Natural killer cell (primary cell): ENCODE measurements at regions of chr3 and their contacts with region 1.

Region 1: GRCh38 chr3:67654099-67654843 is at the start of gene SUCLG2:
- DNase-seq: peak; percentile 71 to 86
- ATAC-seq: peak; percentile 71 to 82 (median 75)
- H3K4me3 ChIP-seq: peak within 1 kb of the TSS; percentile 88
- H3K4me3 Mint-ChIP-seq: peak within 1 kb of the TSS; percentile 82
- H3K27ac ChIP-seq: peak within 1 kb of the TSS; percentile 84
- H3K27ac Mint-ChIP-seq: peak within 1 kb of the TSS; percentile 86 to 89
- H3K4me1 ChIP-seq: peaks cover 30% of the 10 kb centered on the region
- H3K4me1 Mint-ChIP-seq: peaks cover 52 to 59% of the 10 kb centered on the region in 2 donors
- H3K27me3 ChIP-seq: no peaks in the 10 kb centered on the region
- H3K27me3 Mint-ChIP-seq: no peaks in the 10 kb centered on the region
- CTCF ChIP-seq: no peak
- total RNA-seq, gene SUCLG2: 43.6 to 55.8 (median 49.9) TPM

Region 2: GRCh38 chr3:66302288-66302687 is 1352.0 kb before region 1 on chr3:
- intact Hi-C with region 1: loop called (anchors 5 kb)
- DNase-seq: peak in 1 of 2 donors; percentile 84
- ATAC-seq: peak; percentile 61 to 79 (median 70)
- H3K4me3 ChIP-seq: no peak overlapping the region
- H3K4me3 Mint-ChIP-seq: peak overlapping the region; percentile 55
- H3K27ac ChIP-seq: peak overlapping the region; percentile 100
- H3K27ac Mint-ChIP-seq: no peak overlapping the region
- H3K4me1 ChIP-seq: peaks cover 51% of the 10 kb centered on the region
- H3K4me1 Mint-ChIP-seq: peaks cover 17 to 22% of the 10 kb centered on the region in 2 donors
- H3K27me3 ChIP-seq: no peaks in the 10 kb centered on the region
- H3K27me3 Mint-ChIP-seq: no peaks in the 10 kb centered on the region
- CTCF ChIP-seq: no peak

Region 3: GRCh38 chr3:67437086-67437485 is 217.2 kb before region 1 on chr3:
- intact Hi-C with region 1: no loop called
- DNase-seq: no peak
- ATAC-seq: no peak
- H3K4me3 ChIP-seq: no peak overlapping the region
- H3K4me3 Mint-ChIP-seq: no peak overlapping the region
- H3K27ac ChIP-seq: no peak overlapping the region
- H3K27ac Mint-ChIP-seq: no peak overlapping the region
- H3K4me1 ChIP-seq: no peaks in the 10 kb centered on the region
- H3K4me1 Mint-ChIP-seq: peaks cover 14 to 21% of the 10 kb centered on the region in 2 donors
- H3K27me3 ChIP-seq: no peaks in the 10 kb centered on the region
- H3K27me3 Mint-ChIP-seq: no peaks in the 10 kb centered on the region
- CTCF ChIP-seq: no peak

Region 4: DNA sequence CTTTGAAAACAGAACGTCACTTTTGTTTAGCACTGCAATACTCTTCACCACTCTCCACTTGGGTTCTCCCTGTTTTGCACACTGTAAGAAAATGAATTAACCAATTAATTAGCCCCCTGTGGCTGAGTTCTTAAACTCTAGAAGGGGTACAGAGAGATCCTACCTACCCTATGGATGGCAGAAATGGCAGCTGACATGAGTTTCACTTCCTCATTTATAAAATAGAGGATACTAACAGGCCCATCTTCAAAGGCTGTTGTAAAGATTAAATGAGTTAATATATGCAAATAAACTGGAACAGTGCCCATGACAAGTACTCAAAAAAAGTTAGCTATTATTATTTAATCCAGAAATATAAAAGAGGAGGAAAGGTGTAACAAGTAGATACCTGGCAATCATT is 36.8 kb before region 1 on chr3:
- intact Hi-C with region 1: no loop called
- DNase-seq: no peak
- ATAC-seq: no peak
- H3K4me3 ChIP-seq: no peak overlapping the region
- H3K4me3 Mint-ChIP-seq: no peak overlapping the region
- H3K27ac ChIP-seq: no peak overlapping the region
- H3K27ac Mint-ChIP-seq: no peak overlapping the region
- H3K4me1 ChIP-seq: no peaks in the 10 kb centered on the region
- H3K4me1 Mint-ChIP-seq: peaks cover 63 to 65% of the 10 kb centered on the region in 2 donors
- H3K27me3 ChIP-seq: no peaks in the 10 kb centered on the region
- H3K27me3 Mint-ChIP-seq: no peaks in the 10 kb centered on the region
- CTCF ChIP-seq: no peak

Region 5: GRCh38 chr3:67674055-67674454 is 19.8 kb after region 1 on chr3:
- intact Hi-C with region 1: loop called (anchors 1 kb)
- DNase-seq: peak; percentile 26 to 47
- ATAC-seq: peak; percentile 81 to 92 (median 91)
- H3K4me3 ChIP-seq: no peak overlapping the region
- H3K4me3 Mint-ChIP-seq: peak overlapping the region; percentile 63
- H3K27ac ChIP-seq: no peak overlapping the region
- H3K27ac Mint-ChIP-seq: peak overlapping the region; percentile 0 to 44
- H3K4me1 ChIP-seq: peaks cover 18% of the 10 kb centered on the region
- H3K4me1 Mint-ChIP-seq: peaks cover 27 to 33% of the 10 kb centered on the region in 2 donors
- H3K27me3 ChIP-seq: no peaks in the 10 kb centered on the region
- H3K27me3 Mint-ChIP-seq: peaks cover 3 to 7% of the 10 kb centered on the region in 2 donors
- CTCF ChIP-seq: no peak

Region 6: GRCh38 chr3:69084326-69085167 is 1430.3 kb after region 1 on chr3 and contains the start of gene ARL6IP5:
- intact Hi-C with region 1: loop called (anchors 10 kb)
- DNase-seq: peak; percentile 81 to 96
- ATAC-seq: peak; percentile 45 to 77 (median 59)
- H3K4me3 ChIP-seq: peak within 1 kb of the TSS; percentile 92
- H3K4me3 Mint-ChIP-seq: peak within 1 kb of the TSS; percentile 96
- H3K27ac ChIP-seq: peak within 1 kb of the TSS; percentile 78
- H3K27ac Mint-ChIP-seq: peak within 1 kb of the TSS; percentile 90 to 98
- H3K4me1 ChIP-seq: peaks cover 49% of the 10 kb centered on the region
- H3K4me1 Mint-ChIP-seq: peaks cover 60% of the 10 kb centered on the region in 2 donors
- H3K27me3 ChIP-seq: no peaks in the 10 kb centered on the region
- H3K27me3 Mint-ChIP-seq: no peaks in the 10 kb centered on the region
- CTCF ChIP-seq: no peak
- total RNA-seq, gene ARL6IP5: 98.1 to 132 (median 105) TPM